SK-N-SH (cell line): ENCODE measurements at regions of chr11 and their contacts with region 1.

Region 1: GRCh38 chr11:10770626-10771254 is 19.7 kb downstream of the CTR9 start:
- DNase-seq: peak; percentile 49
- H3K4me3 ChIP-seq: no peak overlapping the region
- H3K27ac ChIP-seq: peak overlapping the region in 1 of 2 experiments; percentile 28; a peak in 2 of 4 replicates
- H3K4me1 ChIP-seq: peaks cover 0 to 8% of the 10 kb centered on the region in 2 experiments; a peak in 2 of 4 replicates
- H3K27me3 ChIP-seq: no peaks in the 10 kb centered on the region
- CTCF ChIP-seq: peak; percentile 87
- EP300 ChIP-seq: no peak
- RAD21 ChIP-seq: peak; percentile 74

Region 2: GRCh38 chr11:10564696-10565318 is 205.9 kb before region 1 on chr11:
- CTCF ChIA-PET with region 1: no interaction called
- POLR2A ChIA-PET with region 1: no interaction called
- DNase-seq: no peak
- H3K4me3 ChIP-seq: no peak overlapping the region
- H3K27ac ChIP-seq: no peak overlapping the region
- H3K4me1 ChIP-seq: no peaks in the 10 kb centered on the region
- H3K27me3 ChIP-seq: no peaks in the 10 kb centered on the region
- CTCF ChIP-seq: peak; percentile 41
- EP300 ChIP-seq: no peak
- RAD21 ChIP-seq: 0 out of 2 replicates have a peak, but pooled peaks have one; percentile 4

Region 3: DNA sequence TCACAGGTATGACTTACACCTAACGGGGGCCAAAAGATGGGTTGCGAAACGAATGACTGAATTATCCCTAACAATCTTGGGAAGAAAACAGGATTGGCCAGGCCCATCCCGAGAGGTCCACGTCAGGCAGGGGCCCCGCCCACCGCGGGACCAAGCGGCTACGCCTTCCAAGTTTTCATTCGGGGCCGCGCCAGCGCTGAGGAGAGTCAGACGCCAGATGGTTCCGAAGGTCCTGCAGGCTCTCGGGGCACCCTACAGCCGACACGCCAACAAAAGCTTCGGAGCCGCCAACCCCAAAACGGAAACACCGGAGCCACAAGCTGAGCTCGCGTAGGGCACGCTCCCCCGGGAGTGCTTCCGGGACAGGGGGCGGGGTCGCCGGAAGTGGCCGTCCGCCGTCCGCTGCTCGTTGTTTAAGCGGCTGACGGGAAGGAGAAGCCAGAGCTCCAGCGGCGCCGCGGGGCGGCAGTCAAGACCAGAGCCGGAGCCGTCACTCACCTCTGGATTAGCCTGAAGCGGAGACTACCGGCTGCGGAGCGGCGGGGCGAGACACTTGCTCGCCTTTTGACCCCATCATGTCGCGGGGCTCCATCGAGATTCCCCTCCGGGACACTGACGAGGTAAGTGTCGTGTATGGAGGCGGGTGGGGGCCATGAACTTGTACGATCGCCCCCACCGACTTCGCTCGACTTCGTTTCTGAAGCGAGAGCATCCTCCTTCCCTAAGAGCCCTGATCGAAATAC is 19.7 kb before region 1 on chr11 and contains the start of gene CTR9:
- CTCF ChIA-PET with region 1: interaction called, 12 read pairs
- POLR2A ChIA-PET with region 1: interaction called, 6 read pairs
- DNase-seq: peak; percentile 89
- H3K4me3 ChIP-seq: peak within 1 kb of the TSS; percentile 76 to 98
- H3K27ac ChIP-seq: peak within 1 kb of the TSS; percentile 94 to 99
- H3K4me1 ChIP-seq: peaks cover 0 to 10% of the 10 kb centered on the region in 2 experiments; a peak in 2 of 4 replicates
- H3K27me3 ChIP-seq: no peaks in the 10 kb centered on the region
- CTCF ChIP-seq: peak; percentile 29; the same call in 1 of the 2 replicates
- EP300 ChIP-seq: peak in 1 of 2 experiments; percentile 30; a peak in 1 of 4 replicates
- RAD21 ChIP-seq: peak; percentile 47
- polyA plus RNA-seq, gene CTR9: 10.1 and 13.0 TPM in 2 replicates

Region 4: GRCh38 chr11:10784232-10785145 is 13.7 kb after region 1 on chr11:
- CTCF ChIA-PET with region 1: interaction called, 99 read pairs
- POLR2A ChIA-PET with region 1: no interaction called
- DNase-seq: peak; percentile 37
- H3K4me3 ChIP-seq: no peak overlapping the region
- H3K27ac ChIP-seq: peak overlapping the region; percentile 12 to 56; a peak in 3 of 4 replicates
- H3K4me1 ChIP-seq: peaks cover 8 to 14% of the 10 kb centered on the region in 2 experiments; a peak in 3 of 4 replicates
- H3K27me3 ChIP-seq: no peaks in the 10 kb centered on the region
- CTCF ChIP-seq: no peak
- EP300 ChIP-seq: no peak
- RAD21 ChIP-seq: no peak

Region 5: GRCh38 chr11:10803676-10804075 is 32.9 kb after region 1 on chr11:
- CTCF ChIA-PET with region 1: interaction called, 30 read pairs
- POLR2A ChIA-PET with region 1: interaction called, 19 read pairs
- DNase-seq: no peak
- H3K4me3 ChIP-seq: no peak overlapping the region
- H3K27ac ChIP-seq: no peak overlapping the region; a peak in 2 of 4 replicates
- H3K4me1 ChIP-seq: peaks cover 17 to 30% of the 10 kb centered on the region in 2 experiments
- H3K27me3 ChIP-seq: no peaks in the 10 kb centered on the region
- CTCF ChIP-seq: no peak
- EP300 ChIP-seq: no peak
- RAD21 ChIP-seq: no peak

Region 6: GRCh38 chr11:11022125-11022730 is 251.5 kb after region 1 on chr11:
- CTCF ChIA-PET with region 1: interaction called, 21 read pairs
- POLR2A ChIA-PET with region 1: no interaction called
- DNase-seq: peak; percentile 32
- H3K4me3 ChIP-seq: no peak overlapping the region
- H3K27ac ChIP-seq: no peak overlapping the region
- H3K4me1 ChIP-seq: peaks cover 0 to 6% of the 10 kb centered on the region in 2 experiments; a peak in 1 of 4 replicates
- H3K27me3 ChIP-seq: no peaks in the 10 kb centered on the region
- CTCF ChIP-seq: peak; percentile 66
- EP300 ChIP-seq: no peak
- RAD21 ChIP-seq: peak; percentile 67